ENCODE measurements at regions of chr4 and their contacts with region 1.

Region 1: DNA sequence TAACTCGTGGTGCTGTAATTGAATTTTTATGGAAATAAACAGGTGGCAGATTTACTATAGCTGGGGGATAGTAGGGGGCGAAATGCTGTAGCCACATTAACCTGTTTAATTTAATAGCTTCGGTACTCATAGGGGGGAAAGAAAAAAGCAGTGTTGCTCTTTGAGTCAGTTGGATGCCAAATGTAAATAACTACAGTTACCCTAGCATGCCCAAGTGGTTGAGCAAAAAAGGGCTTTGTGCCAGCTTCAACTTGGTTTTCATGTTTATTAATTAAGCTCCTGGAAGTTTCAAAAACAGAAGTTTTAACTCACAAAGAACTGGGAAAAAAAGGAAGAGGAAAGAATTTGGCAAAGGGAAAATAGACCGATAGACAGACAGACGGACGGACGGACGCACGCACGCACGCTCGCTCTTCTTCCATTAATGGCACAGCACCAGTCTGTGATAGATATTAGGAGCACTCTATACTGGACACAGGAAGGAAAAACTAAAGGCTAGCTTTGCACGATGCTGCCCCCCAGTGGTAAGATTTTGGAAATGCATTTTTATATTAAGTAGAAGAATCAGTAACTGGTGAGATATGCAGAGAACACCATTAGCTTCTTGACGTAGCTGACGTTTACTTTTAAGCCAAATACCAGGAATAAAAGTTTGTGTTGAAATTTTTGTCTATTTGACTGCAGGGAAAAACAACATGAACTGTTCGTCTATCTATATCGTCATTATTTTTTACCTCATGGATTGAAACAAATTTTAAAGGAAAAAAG is 151.8 kb downstream of the SLC7A11 start:
- DNase-seq: no peak
- ATAC-seq: peak; percentile 76

Region 2: DNA sequence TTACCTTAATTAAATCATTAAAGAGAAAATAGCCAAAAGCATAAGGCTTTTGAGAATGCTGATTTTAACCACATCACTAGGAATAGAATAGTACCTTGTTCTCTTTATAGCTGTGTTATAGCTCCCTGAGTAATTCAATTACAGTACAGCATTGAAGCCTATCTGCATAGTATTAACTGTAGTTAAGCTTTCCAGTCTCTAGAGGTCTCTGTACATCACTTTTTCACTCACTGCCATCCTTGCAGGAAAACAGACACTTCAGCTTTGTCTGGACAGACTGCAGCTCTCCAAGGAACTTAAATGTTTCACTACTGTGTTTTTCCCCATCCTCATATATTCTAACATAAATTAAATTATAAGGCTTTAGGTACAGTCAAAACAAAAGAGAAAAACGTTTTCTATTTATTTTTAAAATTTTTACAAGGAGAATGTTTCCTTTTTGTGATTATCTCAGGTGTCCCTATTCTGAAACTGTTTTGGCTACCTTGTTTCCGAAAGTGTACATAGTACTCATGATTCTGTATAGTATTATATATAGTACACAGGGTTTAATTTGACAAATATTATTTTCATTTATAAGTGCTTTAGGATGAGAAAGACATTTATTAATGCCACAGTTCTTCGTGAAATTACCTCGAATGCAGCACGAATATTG is 965.9 kb before region 1 on chr4:
- intact Hi-C with region 1: loop called (anchors 10 kb)
- DNase-seq: no peak
- ATAC-seq: peak; percentile 91

Region 3: DNA sequence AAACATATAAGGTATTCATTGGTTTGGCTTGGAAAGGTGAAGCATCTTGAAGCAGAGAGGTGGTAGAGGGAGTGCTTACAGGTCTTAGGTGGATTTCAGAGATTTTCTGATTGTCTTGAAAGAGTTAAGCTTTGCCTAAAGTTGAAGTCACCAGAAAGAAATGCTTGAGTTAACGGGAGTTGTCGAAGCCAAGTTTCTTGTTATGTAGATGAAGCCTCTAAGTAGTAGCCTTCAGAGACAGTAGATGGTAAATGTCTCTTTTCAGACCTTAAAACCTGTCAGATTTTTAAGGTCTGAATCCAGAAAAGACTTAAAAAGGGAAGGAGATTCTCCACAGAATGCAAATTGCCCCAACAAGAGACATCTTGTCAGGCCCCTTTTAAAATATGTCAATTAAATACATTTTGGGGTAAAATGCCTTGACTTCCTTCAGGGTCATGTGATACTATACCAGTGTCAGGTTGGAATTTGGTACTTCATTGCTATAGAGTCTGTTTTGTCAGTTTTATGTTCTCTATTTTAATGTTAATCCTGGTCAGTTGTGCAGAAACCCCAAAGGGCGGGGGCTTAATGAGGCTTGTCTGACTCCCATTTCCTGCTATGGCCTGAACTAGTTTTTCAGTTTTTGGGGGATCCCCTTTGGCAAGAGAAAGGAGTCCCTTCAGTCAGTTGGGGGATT is 639.0 kb before region 1 on chr4:
- intact Hi-C with region 1: no loop called
- DNase-seq: no peak
- ATAC-seq: no peak

Region 4: DNA sequence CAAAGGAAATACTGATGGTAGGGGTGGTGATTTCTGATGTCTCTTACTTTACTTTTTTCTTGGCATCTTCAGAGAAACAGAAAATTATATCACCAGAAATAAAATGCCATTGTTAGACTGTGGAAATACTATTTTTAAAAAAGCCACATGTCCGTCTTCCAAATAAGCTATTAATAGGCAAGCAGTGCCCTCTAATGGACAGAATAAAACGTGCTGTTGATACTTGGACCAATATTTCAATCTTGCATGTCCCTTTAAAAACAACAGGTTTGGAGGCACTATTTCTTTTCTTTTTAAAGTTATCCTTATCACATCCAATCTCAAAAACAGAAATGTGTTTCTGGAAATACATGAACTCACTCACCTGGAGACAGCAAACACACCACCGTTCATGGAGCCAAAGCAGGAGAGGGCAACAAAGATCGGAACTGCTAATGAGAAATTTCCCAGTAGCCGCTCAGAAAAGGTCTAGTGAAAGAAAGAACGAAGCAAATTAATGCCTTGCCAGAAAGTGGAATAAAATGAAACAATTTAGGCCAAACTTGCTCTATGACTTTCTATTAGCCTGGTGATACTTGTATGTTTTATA is 92.6 kb after region 1 on chr4:
- intact Hi-C with region 1: loop called (anchors 2 kb)
- DNase-seq: no peak
- ATAC-seq: peak; percentile 44

Region 5: DNA sequence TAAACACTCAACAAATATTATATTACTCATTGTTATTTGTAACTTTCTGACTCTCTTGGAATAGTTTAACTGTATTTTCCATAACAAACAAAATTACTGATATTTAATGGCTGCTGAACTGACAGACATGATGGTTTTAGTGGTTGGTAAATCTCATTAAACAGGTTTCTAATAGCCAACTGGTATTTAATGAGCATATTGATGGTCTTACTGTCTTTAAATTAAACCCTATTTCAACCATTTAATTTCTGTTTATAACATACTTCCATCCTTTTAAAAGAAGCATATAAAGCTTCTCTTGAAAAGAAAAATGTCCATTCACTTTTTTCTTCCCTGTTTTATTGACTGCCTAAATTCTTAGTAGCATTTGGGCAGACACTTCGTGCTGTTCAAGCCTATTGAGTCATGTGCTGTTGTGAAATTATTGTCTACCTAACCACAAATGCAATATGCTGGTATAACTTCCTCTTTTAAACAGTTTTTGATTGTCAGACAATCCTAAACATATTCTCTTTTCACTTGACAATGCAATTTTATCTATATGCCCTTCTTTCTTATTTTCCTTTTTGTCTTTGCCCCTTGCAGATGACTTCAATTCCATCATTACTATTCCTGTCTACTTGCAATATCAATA is 315.7 kb after region 1 on chr4:
- intact Hi-C with region 1: loop called (anchors 5 kb)
- DNase-seq: no peak
- ATAC-seq: no peak